ENCODE measurements at regions of chr11 and their contacts with region 1.

Region 1: DNA sequence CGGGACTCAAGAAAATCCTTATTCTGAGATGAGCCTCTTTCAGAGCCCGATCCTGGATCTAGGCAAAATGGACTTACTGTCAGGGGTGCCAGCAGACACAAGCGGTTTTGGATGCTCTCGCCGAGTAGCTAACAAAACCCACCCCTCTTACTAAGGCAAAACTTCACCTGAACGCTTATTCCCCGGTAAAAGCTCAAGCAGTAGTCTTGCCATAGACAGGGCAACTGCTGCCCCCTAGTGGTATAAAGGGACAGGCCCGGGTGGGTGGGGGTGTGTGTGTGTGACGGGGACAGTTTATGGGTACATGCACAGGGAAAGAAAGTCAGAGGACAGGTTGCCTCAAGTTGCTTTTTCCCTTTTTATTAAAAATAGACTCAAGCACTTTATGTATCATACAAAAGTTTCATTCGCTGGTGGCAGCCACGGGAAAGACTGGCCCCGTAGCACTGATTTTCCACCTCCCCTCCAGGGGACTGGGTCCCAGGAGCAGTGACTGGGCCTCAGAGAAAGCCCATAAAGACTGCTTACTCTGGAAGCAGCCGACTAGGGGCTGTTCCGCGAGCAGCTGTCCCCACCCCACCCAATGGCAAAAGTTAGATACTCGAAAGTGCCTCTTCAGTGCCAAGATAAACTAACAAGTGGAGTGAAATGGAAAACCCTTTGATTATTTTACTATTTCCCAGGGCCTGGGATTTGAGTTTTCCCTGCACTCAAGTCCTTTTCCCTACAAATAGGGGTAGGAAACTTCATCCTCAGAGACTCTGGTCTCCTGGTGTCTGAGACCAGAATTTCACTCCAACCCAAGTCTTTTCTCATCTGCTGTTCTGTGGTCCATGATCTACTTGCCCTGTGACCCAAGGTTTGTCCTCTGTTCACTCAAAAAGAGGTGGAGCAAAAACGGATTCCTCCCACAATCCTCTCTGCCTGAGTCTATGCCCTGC is 4.7 kb downstream of the YPEL4 start:
- DNase-seq: peak; percentile 74 to 93 (median 85)
- ATAC-seq: peak; percentile 61
- H3K4me3 ChIP-seq: no peak overlapping the region
- H3K4me3 Mint-ChIP-seq: no peak overlapping the region
- H3K27ac ChIP-seq: no peak overlapping the region
- H3K27ac Mint-ChIP-seq: no peak overlapping the region
- H3K4me1 ChIP-seq: peaks cover 15% of the 10 kb centered on the region
- H3K4me1 Mint-ChIP-seq: peaks cover 34% of the 10 kb centered on the region
- H3K27me3 ChIP-seq: peaks cover 0 to 22% of the 10 kb centered on the region in 2 experiments
- H3K27me3 Mint-ChIP-seq: peaks cover 48% of the 10 kb centered on the region
- CTCF ChIP-seq: peak; percentile 78

Region 2: DNA sequence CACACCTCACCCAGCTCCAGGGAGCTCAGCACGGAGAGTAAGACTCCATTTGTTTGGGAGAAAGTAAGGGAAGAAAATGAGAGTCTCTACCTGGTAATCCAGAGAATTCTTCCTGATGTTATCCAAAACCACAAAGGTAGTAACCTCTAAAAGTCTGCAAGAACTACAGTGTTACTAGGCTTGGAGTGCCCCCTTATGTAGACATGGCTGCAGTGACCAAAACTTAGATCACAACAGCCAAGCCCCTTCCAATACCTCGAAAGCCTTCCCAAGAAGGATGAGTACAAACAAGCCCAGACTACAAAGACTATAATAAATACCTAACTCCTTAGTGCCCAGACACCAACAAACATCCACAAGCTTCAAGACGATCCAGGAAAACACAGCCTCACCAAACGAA is 82.4 kb before region 1 on chr11:
- CTCF ChIA-PET with region 1: interaction called, 207 read pairs
- POLR2A ChIA-PET with region 1: interaction called, 7 read pairs
- intact Hi-C with region 1: no loop called
- DNase-seq: no peak
- ATAC-seq: no peak
- H3K4me3 ChIP-seq: no peak overlapping the region
- H3K4me3 Mint-ChIP-seq: peak overlapping the region; percentile 3
- H3K27ac ChIP-seq: no peak overlapping the region
- H3K27ac Mint-ChIP-seq: peak overlapping the region; percentile 77
- H3K4me1 ChIP-seq: peaks cover 25% of the 10 kb centered on the region
- H3K4me1 Mint-ChIP-seq: peaks cover 55% of the 10 kb centered on the region
- H3K27me3 ChIP-seq: no peaks in the 10 kb centered on the region
- H3K27me3 Mint-ChIP-seq: no peaks in the 10 kb centered on the region
- CTCF ChIP-seq: no peak

Region 3: DNA sequence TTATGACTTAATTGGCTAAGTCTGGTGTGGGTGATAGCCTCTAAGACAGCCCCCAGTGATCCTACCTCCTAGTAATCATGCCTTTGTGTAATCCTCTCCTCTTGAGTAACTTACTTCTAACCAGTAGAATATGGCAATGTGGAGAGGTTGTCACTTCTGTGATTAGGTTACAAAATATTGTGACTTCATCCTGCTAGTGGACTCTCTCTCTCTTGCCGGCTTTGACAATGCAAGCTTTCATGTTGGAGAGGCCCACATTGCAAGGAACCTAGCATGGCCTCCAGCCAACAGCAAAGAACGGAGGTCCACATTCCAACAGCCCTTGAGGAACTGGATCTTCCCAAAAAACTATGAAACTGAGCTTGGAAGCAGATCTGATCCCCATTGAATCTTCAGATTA is 14.8 kb before region 1 on chr11:
- CTCF ChIA-PET with region 1: interaction called, 14 read pairs
- POLR2A ChIA-PET with region 1: no interaction called
- intact Hi-C with region 1: no loop called
- DNase-seq: no peak
- ATAC-seq: no peak
- H3K4me3 ChIP-seq: no peak overlapping the region
- H3K4me3 Mint-ChIP-seq: no peak overlapping the region
- H3K27ac ChIP-seq: no peak overlapping the region
- H3K27ac Mint-ChIP-seq: no peak overlapping the region
- H3K4me1 ChIP-seq: no peaks in the 10 kb centered on the region
- H3K4me1 Mint-ChIP-seq: no peaks in the 10 kb centered on the region
- H3K27me3 ChIP-seq: no peaks in the 10 kb centered on the region
- H3K27me3 Mint-ChIP-seq: peaks cover 24% of the 10 kb centered on the region
- CTCF ChIP-seq: no peak